RWPE1 (cell line): ENCODE measurements at regions of chr4 and their contacts with region 1.

Region 1: DNA sequence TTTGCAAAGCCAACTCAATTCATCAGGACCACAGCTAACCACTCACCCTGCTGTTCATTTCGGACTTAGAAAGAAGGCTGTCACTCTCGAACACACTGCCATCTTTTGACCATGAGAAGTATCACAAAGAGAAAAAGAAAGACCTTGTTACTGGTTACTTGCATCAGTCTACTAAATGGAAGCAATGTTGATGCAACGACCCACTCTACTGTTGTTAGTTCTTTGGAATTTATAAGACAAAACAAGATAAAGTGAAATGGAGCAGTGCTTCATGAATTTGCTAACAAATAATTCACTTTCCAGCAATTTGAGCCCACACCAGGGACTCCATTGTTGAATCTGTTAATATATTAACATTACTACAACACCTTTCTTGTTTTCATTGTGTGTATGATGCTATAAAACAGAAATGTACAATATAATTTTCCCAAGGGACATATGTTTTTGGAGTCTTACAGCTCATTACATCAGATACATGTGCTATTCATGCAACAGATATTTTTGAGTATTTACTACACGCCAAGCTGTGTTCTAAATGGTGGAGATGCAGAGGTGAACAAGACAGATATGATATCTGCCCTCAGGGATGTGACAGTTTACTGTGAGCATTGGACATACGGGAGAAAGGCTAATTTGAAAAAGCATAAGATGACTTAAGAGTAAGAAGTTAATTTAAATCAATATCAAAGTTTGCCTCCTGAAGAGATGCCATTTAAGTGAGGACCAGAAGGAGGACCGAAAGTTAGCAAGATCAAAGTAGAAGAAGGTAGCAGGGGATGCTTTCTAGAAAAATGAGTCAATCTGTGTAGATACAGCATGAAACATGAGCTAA is 87.2 kb downstream of the AREG start:
- DNase-seq: peak; percentile 64
- H3K27ac ChIP-seq: no peak overlapping the region
- CTCF ChIP-seq: peak; percentile 78

Region 2: DNA sequence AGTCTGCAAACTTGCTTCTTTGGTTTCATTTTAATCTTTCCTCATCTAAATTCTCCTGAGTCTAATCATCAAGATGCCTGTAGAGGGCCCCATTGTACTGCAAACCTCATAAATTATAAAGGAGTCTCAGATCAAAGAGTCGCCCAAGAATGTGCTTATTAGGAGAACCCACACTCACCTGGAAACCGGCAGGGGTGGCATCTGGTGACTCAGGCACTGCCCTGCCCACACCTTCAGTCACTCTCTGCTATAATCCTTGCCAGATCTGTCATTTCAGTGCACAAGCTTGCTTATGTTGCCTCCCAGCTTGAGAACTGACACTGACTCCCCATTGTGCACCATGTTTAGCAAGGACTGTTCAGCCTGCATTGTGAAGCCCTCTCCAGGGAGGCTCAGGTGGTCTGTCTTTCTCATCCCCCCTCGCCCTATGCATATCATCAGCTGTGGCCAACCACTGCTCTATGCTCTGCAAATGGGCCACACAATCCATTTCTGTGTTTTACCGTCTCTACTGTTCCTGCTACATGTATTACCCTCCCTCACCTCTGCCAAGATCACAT is 211.5 kb before region 1 on chr4:
- CTCF ChIA-PET with region 1: interaction called, 14 read pairs
- POLR2A ChIA-PET with region 1: no interaction called
- DNase-seq: peak; percentile 85
- H3K27ac ChIP-seq: peak overlapping the region; percentile 56
- CTCF ChIP-seq: peak; percentile 69

Region 3: GRCh38 chr4:74376888-74377483 is 155.2 kb before region 1 on chr4:
- CTCF ChIA-PET with region 1: interaction called, 18 read pairs
- POLR2A ChIA-PET with region 1: no interaction called
- DNase-seq: peak; percentile 62
- H3K27ac ChIP-seq: no peak overlapping the region
- CTCF ChIP-seq: peak; percentile 80

Region 4: DNA sequence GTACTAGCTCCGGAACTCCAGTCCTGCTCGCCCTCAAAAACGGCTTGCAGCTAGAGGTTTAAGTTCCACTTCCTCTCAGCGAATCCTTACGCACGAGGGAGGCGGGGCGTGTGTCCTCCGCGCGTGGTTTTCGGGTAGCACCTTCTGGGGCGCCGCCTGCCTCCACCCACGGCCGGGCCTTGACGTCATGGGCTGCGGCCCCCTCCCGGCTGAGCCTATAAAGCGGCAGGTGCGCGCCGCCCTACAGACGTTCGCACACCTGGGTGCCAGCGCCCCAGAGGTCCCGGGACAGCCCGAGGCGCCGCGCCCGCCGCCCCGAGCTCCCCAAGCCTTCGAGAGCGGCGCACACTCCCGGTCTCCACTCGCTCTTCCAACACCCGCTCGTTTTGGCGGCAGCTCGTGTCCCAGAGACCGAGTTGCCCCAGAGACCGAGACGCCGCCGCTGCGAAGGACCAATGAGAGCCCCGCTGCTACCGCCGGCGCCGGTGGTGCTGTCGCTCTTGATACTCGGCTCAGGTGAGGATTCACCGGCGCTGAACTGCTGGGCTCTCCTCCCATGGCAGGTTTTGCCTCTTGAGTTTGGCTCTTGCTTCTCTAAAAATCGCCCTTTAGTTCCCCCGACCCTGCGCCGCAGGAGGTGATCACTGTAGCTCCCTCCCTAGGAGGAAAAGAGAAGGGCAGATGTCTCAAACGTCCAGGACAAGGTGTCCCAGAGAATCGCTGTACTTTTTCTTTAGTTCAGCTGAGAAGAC is 87.1 kb before region 1 on chr4 and contains the start of gene AREG:
- CTCF ChIA-PET with region 1: interaction called, 13 read pairs
- POLR2A ChIA-PET with region 1: no interaction called
- DNase-seq: peak; percentile 87
- H3K27ac ChIP-seq: peak within 1 kb of the TSS; percentile 96
- CTCF ChIP-seq: peak; percentile 70

Region 5: DNA sequence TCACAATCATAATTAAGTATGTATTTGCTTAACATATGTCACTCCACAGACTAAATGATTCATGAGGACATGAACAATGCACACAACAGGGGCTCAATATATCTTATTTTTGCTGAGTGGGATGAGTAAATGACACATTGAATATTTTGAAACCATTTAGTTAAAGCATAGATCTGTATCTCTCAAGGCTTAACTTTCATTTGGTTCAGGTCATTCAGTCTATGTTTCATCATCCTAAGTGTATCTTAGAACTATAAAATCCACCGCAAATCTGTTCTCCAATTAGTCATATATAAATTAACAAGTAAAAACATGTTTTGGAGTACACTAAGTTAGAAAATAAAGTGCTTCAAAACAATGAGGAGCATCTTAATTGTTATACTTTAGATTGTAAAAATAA is 41.4 kb before region 1 on chr4:
- CTCF ChIA-PET with region 1: no interaction called
- POLR2A ChIA-PET with region 1: no interaction called
- DNase-seq: peak; percentile 74
- H3K27ac ChIP-seq: no peak overlapping the region
- CTCF ChIP-seq: no peak

Region 6: GRCh38 chr4:74675673-74676279 is 143.6 kb after region 1 on chr4:
- CTCF ChIA-PET with region 1: interaction called, 12 read pairs
- POLR2A ChIA-PET with region 1: no interaction called
- DNase-seq: peak; percentile 63
- H3K27ac ChIP-seq: no peak overlapping the region
- CTCF ChIP-seq: peak; percentile 89